ENCODE measurements at regions of chr17 and their contacts with region 1.

Region 1: GRCh38 chr17:55478986-55479385 is 32.3 kb downstream of the SMIM36 start:
- DNase-seq: no peak
- ATAC-seq: no peak
- H3K4me3 ChIP-seq: no peak overlapping the region
- H3K27ac ChIP-seq: no peak overlapping the region
- H3K4me1 ChIP-seq: no peaks in the 10 kb centered on the region
- H3K27me3 ChIP-seq: no peaks in the 10 kb centered on the region
- CTCF ChIP-seq: no peak
- POLR2A ChIP-seq: no peak
- RAD21 ChIP-seq: no peak

Region 2: DNA sequence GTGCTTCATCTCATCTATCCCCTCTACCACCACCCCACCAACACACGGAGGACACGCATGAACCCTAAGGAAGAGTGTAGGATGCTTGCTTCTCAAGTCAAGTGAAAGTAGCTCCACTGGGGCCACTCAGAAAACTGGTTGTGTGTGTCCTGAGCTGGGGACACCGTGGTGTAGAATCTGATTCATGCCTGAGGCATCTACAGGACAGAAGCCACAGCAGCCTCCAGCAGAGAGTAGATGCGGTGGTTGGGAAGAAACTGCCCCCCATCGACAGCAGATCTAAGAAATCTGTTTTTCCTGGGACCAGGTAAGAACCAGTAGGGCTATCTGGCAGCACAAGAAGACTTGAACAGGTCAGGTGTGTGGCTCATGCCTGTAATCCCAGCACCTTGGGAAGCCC is 266.1 kb before region 1 on chr17:
- CTCF ChIA-PET with region 1: no interaction called
- POLR2A ChIA-PET with region 1: no interaction called
- RAD21 ChIA-PET with region 1: no interaction called
- intact Hi-C with region 1: loop called (anchors 2 kb)
- DNase-seq: no peak
- ATAC-seq: no peak
- H3K4me3 ChIP-seq: no peak overlapping the region
- H3K27ac ChIP-seq: no peak overlapping the region
- H3K4me1 ChIP-seq: peaks cover 0 to 11% of the 10 kb centered on the region in 2 experiments; a peak in 2 of 4 replicates
- H3K27me3 ChIP-seq: no peaks in the 10 kb centered on the region
- CTCF ChIP-seq: no peak
- POLR2A ChIP-seq: no peak
- RAD21 ChIP-seq: no peak

Region 3: DNA sequence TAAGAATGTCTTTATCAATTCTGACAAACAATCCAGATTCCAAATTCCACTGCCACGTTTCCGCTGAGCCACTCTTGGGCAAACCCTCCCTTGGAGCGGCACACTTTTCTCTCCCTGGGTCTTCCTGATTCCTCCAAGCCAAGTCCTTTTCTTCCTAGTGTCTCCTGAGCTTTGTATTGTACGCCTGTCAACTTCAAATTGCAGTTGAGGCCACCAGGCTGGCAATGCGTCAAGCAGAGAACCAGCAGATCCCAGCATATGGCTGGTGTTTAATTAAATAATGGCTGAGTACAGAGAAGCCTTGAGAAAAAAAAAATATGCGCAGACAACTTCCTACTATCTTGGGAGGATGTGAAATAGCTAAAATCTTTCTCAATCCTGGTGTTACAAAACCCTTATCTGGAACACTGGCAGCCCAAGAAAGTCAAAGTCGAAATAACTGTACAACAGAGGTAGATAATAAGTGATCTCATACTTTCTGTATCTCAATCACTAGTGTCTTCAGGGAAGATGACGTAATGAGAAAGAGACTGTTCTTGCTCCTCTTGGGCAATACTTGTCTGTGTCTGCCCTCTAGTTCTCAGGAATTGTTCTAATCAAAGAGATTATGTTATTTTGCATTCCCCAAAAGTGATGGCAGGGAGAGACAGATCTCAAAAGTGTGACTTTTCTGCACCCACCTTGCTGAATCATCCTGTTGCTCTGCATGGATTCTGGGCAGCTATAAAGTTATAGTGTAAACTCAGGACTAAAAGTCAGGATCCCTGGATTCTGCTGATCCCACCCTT is 17.3 kb after region 1 on chr17:
- CTCF ChIA-PET with region 1: no interaction called
- POLR2A ChIA-PET with region 1: no interaction called
- RAD21 ChIA-PET with region 1: no interaction called
- intact Hi-C with region 1: no loop called
- DNase-seq: no peak
- ATAC-seq: no peak
- H3K4me3 ChIP-seq: no peak overlapping the region
- H3K27ac ChIP-seq: no peak overlapping the region
- H3K4me1 ChIP-seq: no peaks in the 10 kb centered on the region
- H3K27me3 ChIP-seq: no peaks in the 10 kb centered on the region
- CTCF ChIP-seq: no peak
- POLR2A ChIP-seq: no peak
- RAD21 ChIP-seq: no peak

Region 4: DNA sequence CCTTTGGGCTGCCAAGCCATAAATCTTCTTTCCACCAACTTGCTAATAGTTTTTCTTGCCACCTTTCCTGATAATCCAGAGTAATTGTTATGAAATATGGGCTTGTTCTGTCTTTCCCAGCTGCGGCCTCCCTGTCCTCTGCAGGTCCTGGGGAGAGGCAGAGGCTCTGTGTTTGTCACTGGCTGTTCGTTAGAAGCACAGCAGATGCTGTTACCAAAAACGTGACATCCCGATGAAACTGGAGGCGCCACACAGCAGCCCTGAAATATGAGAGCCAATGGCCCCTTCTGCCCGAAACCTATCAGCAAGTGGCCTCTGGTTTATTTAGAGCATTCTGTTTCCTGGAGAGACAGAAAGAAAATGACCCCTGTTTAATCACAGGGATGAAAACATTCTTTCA is 559.1 kb after region 1 on chr17:
- CTCF ChIA-PET with region 1: no interaction called
- POLR2A ChIA-PET with region 1: no interaction called
- RAD21 ChIA-PET with region 1: no interaction called
- intact Hi-C with region 1: no loop called
- DNase-seq: no peak
- ATAC-seq: no peak
- H3K4me3 ChIP-seq: no peak overlapping the region
- H3K27ac ChIP-seq: no peak overlapping the region
- H3K4me1 ChIP-seq: no peaks in the 10 kb centered on the region
- H3K27me3 ChIP-seq: peaks cover 34% of the 10 kb centered on the region
- CTCF ChIP-seq: no peak
- POLR2A ChIP-seq: no peak
- RAD21 ChIP-seq: no peak

Measured in HCT116 (cell line).